Psoas muscle (tissue), 8 donors: ENCODE measurements at regions of chr4 and their contacts with region 1.

Region 1: GRCh38 chr4:98568941-98569663 is 89.3 kb downstream of the TSPAN5 start:
- DNase-seq: no peak
- ATAC-seq: no peak
- H3K4me3 ChIP-seq: no peak overlapping the region
- H3K27ac ChIP-seq: no peak overlapping the region
- H3K4me1 ChIP-seq: no peaks in the 10 kb centered on the region
- H3K27me3 ChIP-seq: no peaks in the 10 kb centered on the region
- CTCF ChIP-seq: no peak

Region 2: DNA sequence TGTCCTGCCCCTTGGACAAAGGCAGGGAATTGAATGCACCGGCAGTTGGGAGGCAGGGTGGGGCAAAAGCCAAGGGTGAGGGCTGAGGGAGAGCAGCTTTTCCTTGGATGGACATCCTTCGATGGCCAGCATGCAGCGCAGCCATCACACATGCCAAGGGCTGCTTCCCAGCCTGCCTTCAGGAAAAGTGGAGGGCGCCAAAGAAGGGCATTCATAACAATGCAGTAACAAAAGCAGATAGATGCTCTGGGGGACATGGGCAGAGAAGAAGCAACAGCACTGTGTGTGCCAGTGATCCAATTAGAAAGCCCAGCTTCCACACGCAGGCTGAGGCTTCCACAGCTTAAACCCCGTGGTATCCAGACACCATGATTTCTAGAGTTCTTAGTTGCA is 17.9 kb after region 1 on chr4:
- intact Hi-C with region 1: loop called in 1 of 2 experiments (anchors 1 kb)
- DNase-seq: no peak
- ATAC-seq: no peak
- H3K4me3 ChIP-seq: no peak overlapping the region
- H3K27ac ChIP-seq: no peak overlapping the region
- H3K4me1 ChIP-seq: no peaks in the 10 kb centered on the region
- H3K27me3 ChIP-seq: no peaks in the 10 kb centered on the region
- CTCF ChIP-seq: no peak